Aorta (tissue), 5 donors: ENCODE measurements at regions of chr20 and their contacts with region 1.

Region 1: GRCh38 chr20:47677635-47678453 is 107.4 kb downstream of the SULF2 start:
- DNase-seq: no peak
- ATAC-seq: peak; percentile 54
- H3K4me3 ChIP-seq: no peak overlapping the region
- H3K27ac ChIP-seq: no peak overlapping the region
- H3K4me1 ChIP-seq: no peaks in the 10 kb centered on the region
- H3K27me3 ChIP-seq: no peaks in the 10 kb centered on the region

Region 2: DNA sequence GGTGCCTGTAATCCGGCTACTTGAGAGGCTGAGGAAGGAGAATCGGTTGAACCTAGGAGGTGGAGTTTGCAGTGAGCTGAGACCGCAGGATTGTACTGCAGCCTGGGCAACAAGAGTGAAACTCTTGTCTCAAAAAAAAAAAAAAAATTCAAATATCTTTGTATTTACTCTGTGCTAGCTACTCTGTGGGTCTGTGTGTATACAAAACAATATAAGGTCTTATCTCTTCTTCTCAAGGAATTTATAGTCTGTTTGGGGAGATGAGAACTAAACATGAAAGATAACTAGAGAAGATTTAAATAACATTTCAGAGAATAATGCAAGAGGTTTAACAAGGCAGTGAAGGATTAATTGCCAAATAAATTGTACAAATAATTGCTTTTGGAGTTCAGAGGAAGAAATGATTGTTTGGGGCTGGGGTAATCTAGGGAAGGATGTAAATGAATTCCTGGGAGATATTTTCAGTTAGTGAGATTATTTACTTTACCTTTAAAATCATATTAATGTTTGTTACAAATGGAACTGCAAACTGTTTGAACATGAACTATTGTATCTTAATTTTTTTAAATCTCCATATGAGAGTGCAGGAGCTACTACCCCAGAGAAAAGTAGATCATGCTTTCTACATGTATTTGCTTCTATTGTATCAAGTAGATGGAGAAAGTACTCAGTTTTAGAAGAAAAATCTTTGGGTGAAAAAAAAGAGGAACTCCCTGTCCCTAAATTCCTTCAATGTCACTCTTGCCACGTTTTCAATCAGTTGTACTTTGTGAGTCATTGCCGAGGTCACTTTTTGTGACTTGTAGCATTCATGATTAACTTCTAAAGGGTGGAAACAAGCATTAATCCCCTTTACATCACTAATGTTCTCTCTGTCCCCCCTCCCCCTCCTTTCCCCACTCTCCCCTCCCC is 137.1 kb before region 1 on chr20:
- intact Hi-C with region 1: no loop called
- DNase-seq: no peak
- ATAC-seq: no peak
- H3K4me3 ChIP-seq: no peak overlapping the region
- H3K27ac ChIP-seq: no peak overlapping the region
- H3K4me1 ChIP-seq: peaks cover 2 to 5% of the 10 kb centered on the region in 2 donors
- H3K27me3 ChIP-seq: no peaks in the 10 kb centered on the region

Region 3: DNA sequence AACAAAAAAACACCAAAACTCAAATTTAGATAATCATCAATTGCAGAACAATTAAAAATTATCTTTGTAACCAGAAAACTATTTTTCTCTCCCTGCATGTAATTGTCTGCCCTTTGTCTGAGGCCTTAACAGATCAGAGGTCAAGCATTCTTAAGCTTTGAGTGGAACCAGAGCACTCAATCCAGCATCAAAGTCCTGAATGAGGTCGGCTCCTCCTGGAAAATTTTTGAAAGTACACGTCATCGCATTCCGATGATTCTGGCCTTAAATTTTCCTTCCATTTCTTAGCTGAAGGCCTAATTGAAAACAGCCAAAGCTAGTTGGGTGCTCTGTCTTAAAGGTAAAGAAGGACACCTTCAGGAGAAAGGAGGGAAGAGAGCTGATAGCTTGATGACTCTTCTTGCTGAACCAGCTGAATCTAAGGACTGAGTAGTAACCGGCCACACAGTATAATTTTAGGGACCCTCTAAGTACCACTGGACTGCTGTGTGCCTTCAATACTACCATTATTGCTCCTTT is 617.7 kb after region 1 on chr20:
- intact Hi-C with region 1: loop called in 1 of 2 experiments (anchors 5 kb)
- DNase-seq: no peak
- ATAC-seq: peak; percentile 63
- H3K4me3 ChIP-seq: no peak overlapping the region
- H3K27ac ChIP-seq: peak overlapping the region; percentile 16 to 92
- H3K4me1 ChIP-seq: no peaks in the 10 kb centered on the region
- H3K27me3 ChIP-seq: no peaks in the 10 kb centered on the region